SK-MEL-5 (cell line): ENCODE measurements at regions of chr17 and their contacts with region 1.

Region 1: GRCh38 chr17:35312790-35313711 is 60.4 kb downstream of the SLFN11 start:
- DNase-seq: peak; percentile 74

Region 2: GRCh38 chr17:35119368-35120165 is 193.5 kb before region 1 on chr17 and contains the start of gene RAD51D:
- in situ Hi-C with region 1: no loop called
- DNase-seq: peak; percentile 69
- total RNA-seq, gene RAD51D: 5.5 and 8.2 TPM in 2 replicates

Region 3: GRCh38 chr17:35448214-35448898 is 135.3 kb after region 1 on chr17 and contains the start of gene SLFN13:
- in situ Hi-C with region 1: loop called (anchors 25 kb)
- DNase-seq: no peak
- total RNA-seq, gene SLFN13: not detected in 2 replicates

Region 4: DNA sequence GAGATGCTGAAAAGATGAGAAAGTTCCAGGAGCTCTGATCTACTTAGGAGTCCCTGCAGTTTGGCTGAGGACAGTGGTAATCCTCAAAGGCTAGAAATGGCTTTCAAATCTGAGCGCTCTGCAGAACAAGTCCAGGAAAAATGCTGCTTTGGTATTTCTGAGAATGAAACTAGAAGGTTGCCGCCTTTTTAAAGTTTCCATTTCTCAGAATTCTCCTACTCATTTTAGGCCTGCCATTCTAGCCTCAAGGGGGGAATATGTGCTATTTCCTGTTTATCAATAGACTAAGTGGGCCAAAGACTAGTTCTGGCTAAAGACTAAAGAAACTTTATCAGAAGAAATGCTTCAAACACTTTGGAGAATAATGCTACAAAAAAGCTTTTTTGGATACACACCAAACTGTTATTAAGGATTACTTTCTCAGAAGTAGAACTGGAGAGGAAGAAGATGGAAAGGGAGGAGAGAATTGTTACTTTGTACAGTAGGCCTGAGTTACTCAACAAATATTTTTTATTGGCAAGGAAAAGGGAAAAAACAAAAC is 224.6 kb after region 1 on chr17 and contains the start of gene SLFN12L:
- in situ Hi-C with region 1: loop called (anchors 10 kb)
- DNase-seq: no peak
- total RNA-seq, gene SLFN12L: not detected in 2 replicates